ENCODE measurements at regions of chr4 and their contacts with region 1.

Region 1: DNA sequence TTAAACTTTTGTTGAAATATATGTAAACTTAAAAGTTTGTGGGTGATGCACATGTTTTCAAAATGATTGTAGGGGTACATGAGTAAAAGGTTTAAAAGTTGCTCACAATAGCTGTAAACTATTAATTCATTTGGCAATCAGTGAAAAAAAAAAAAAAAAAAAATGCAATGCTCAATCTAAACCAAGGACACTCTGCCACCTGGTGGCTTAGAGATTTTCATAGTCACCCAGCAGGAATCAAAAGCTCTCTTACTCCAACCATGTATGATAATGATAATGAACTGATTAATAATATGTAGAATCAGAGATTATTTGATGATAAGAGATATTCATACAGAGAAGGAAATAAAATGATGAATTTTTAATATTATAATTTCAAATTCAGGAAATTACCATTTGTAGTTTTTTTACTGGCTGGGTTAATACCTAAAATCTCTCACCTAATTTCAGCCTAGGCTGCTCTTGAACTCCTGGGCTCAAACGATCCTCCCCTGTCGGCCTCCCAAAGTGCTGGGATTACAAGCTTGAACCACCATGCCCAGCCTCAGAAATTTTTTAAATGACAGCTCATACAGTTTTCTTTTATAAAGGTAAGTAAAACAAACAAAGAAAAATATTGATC is 46.9 kb upstream of the SLC25A4 start:
- DNase-seq: peak; percentile 36
- H3K4me3 Mint-ChIP-seq: no peak overlapping the region
- H3K27ac Mint-ChIP-seq: no peak overlapping the region
- H3K4me1 Mint-ChIP-seq: no peaks in the 10 kb centered on the region
- H3K27me3 Mint-ChIP-seq: no peaks in the 10 kb centered on the region
- CTCF ChIP-seq: no peak

Region 2: GRCh38 chr4:185039508-185040273 is 56.5 kb before region 1 on chr4:
- CTCF ChIA-PET with region 1: interaction called, 15 read pairs
- intact Hi-C with region 1: loop called (anchors 1 kb)
- DNase-seq: peak; percentile 61
- H3K4me3 Mint-ChIP-seq: peak overlapping the region; percentile 60
- H3K27ac Mint-ChIP-seq: peak overlapping the region; percentile 73
- H3K4me1 Mint-ChIP-seq: peaks cover 20% of the 10 kb centered on the region
- H3K27me3 Mint-ChIP-seq: no peaks in the 10 kb centered on the region
- CTCF ChIP-seq: peak; percentile 38

Region 3: DNA sequence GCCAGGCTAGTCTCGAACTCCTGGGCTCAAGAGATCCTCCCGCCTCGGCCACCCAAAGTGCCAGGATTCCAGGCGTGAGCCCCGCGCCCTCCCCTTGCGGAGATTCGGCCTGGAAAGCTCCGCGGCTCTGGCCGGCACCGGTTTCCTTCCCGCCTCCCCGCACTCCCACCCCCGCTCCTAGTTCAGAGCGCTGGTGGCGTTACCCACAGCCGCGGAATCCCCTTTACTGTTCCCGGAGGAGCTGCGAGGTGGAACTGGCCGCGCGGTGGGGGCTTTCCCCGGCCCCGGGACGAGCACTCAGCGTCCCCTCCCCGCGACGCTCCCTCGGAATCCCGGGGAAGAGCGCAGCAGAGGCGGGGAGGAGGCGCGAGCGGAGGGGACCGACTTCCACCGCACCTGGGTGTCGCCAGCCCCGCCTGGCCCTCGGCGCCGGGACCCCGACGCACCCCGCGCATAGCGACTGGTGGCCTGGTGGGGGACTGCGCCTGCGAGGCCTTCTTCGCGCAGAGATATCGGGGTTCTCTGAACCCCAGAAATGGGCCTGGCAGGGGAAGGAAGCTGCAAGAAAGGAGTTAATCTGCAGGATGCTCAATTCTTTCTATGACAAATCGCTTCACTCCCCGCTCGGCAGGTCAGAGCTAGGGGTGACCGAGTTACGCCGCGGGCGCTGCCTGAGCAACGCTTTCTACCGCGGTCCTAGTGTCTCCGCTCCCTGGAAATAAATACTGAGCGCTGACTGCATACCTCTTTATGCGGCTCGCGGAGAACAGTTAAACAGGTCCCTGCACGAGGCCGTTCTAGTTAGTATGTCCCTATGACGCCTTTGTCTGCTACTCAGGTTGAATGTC is 32.4 kb after region 1 on chr4:
- CTCF ChIA-PET with region 1: interaction called, 13 read pairs
- intact Hi-C with region 1: no loop called
- DNase-seq: peak; percentile 24
- H3K4me3 Mint-ChIP-seq: peak overlapping the region; percentile 70
- H3K27ac Mint-ChIP-seq: no peak overlapping the region
- H3K4me1 Mint-ChIP-seq: no peaks in the 10 kb centered on the region
- H3K27me3 Mint-ChIP-seq: no peaks in the 10 kb centered on the region
- CTCF ChIP-seq: no peak

Region 4: DNA sequence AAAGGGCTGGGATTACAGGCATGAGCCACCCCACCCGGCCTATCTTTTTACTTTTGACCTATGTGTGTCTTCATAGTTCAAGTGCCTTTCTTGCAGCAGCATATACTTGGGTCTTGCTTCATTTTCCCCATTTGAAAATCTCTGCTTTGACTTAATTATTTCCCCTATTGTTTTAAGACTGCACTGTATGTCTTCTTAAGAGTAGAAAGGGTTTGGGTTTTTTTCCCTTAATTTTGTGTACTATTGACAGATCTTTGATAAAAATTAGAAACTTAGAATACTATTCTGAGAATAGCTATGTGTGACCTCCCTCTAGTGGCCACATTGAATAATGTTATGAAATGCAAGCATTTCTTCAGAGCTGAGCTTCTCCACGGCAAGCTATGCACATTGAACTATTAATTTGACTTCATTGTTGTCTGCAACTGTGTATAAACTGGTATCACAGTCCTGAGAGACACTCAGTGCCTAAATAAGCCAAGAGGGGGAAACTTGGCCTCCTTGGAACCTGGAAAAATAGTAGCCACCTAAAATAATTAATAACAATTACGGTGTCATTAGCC is 38.2 kb after region 1 on chr4:
- CTCF ChIA-PET with region 1: interaction called, 18 read pairs
- intact Hi-C with region 1: loop called (anchors 2 kb)
- DNase-seq: peak; percentile 6
- H3K4me3 Mint-ChIP-seq: no peak overlapping the region
- H3K27ac Mint-ChIP-seq: no peak overlapping the region
- H3K4me1 Mint-ChIP-seq: no peaks in the 10 kb centered on the region
- H3K27me3 Mint-ChIP-seq: no peaks in the 10 kb centered on the region
- CTCF ChIP-seq: peak; percentile 36

Measured in Calu3 (cell line).